ENCODE measurements at regions of chr4 and their contacts with region 1.

Region 1: GRCh38 chr4:104860238-104861123 is 286.2 kb upstream of the TET2 start:
- DNase-seq: peak; percentile 81

Region 2: GRCh38 chr4:104015680-104016253 is 844.7 kb before region 1 on chr4:
- in situ Hi-C with region 1: loop called (anchors 25 kb)
- DNase-seq: peak; percentile 62

Measured in SK-MEL-5 (cell line).